Activated T-helper 2 cell treated with anti-CD3 and anti-CD28 coated beads, Interferon-gamma antibody, Interleukin-2, Interleukin-4, amounts not matched to agents 10 μg/mL and 5 μg/mL and 100 μg/mL, durations not matched to agents 14 hours and 24 hours and 36 hours (primary cell): ENCODE measurements at regions of chr1 and their contacts with region 1.

Region 1: GRCh38 chr1:43073490-43074230 is 98.4 kb downstream of the EBNA1BP2 start:
- DNase-seq: peak; percentile 55
- H3K4me3 Mint-ChIP-seq: no peak overlapping the region
- H3K27ac Mint-ChIP-seq: no peak overlapping the region
- H3K4me1 Mint-ChIP-seq: peaks cover 4% of the 10 kb centered on the region
- H3K27me3 Mint-ChIP-seq: peaks cover 2% of the 10 kb centered on the region

Region 2: DNA sequence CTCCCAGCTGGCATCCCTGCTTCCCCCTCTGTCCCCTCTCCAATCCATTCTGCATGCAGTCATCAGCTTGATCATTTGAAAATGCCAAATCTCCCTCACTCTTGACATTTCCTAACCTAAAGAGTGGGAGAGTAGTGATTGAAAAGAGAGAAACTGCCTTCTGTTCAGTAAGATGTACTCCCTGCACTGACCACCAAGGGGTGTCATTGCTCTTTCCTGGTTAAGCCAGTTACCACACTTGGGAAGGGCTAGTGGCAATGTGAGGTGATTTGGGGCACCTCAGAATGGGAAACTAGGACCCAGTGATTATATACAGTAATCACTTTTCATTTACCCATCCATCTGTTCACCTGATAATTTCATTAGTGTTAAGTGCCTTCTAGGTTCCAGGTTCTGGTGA is 295.8 kb before region 1 on chr1:
- intact Hi-C with region 1: loop called (anchors 2 kb)
- DNase-seq: no peak
- H3K4me3 Mint-ChIP-seq: no peak overlapping the region
- H3K27ac Mint-ChIP-seq: no peak overlapping the region
- H3K4me1 Mint-ChIP-seq: peaks cover 42% of the 10 kb centered on the region
- H3K27me3 Mint-ChIP-seq: no peaks in the 10 kb centered on the region

Region 3: DNA sequence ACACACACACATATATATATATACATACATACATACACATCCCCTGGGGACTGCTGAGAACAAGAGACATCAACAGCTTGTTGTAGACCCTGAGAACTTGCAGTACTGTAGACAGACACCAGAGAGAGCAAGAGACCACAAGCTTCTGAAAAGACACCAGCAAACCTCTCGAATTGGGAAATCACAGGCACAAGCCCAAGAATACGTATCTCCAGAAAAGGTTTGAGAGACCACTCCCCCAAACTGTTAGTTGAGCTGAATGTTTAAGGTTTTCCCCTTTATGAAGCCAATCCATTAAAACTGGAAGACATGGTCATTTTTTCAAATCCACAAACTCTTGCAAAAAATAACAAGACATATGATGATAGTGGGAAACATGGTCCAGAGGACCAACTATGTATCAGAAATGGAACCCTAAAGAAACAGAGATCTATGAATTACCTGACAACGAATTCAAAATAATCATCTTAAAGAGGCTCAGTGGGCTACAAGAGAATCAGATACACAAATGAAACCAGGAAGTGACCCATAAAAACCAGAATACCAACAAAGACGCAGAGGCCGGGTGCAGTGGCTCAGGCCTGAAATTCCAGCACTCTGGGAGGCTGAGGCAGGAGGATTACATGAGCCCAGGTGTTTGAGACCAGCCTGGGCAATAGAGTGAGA is 160.1 kb before region 1 on chr1:
- intact Hi-C with region 1: loop called (anchors 1 kb)
- DNase-seq: peak; percentile 38
- H3K4me3 Mint-ChIP-seq: no peak overlapping the region
- H3K27ac Mint-ChIP-seq: no peak overlapping the region
- H3K4me1 Mint-ChIP-seq: peaks cover 4% of the 10 kb centered on the region
- H3K27me3 Mint-ChIP-seq: peaks cover 10% of the 10 kb centered on the region